ENCODE measurements at regions of chr12 and their contacts with region 1.

Region 1: GRCh38 chr12:27123642-27124041 is 41.3 kb upstream of the C12orf71 start:
- DNase-seq: no peak
- ATAC-seq: no peak
- H3K4me3 ChIP-seq: no peak overlapping the region
- H3K27ac ChIP-seq: no peak overlapping the region
- H3K4me1 ChIP-seq: no peaks in the 10 kb centered on the region
- H3K27me3 ChIP-seq: no peaks in the 10 kb centered on the region
- CTCF ChIP-seq: peak in 2 of 3 experiments; percentile 28 to 37; a peak in 3 of 6 replicates
- POLR2A ChIP-seq: no peak
- RAD21 ChIP-seq: peak; percentile 47

Region 2: DNA sequence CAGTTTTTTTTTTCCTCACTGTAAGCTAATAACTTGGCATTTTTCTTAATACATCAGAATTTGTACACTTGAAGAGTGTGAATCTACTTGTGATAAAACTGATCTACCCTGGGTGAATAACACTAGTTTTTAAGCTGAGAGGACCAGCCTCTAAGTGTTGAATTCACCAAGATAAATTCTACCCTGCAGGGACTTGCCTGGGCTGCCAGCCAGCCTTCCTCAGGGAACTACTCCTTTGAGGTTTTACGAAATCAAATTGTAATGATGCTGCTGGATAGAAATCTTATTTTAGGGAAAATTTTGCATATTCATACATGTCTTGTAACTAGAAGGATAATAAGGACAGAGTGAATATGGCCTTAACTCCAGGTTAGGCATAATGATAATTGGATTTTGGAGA is 99.4 kb before region 1 on chr12:
- CTCF ChIA-PET with region 1: no interaction called
- POLR2A ChIA-PET with region 1: no interaction called
- RAD21 ChIA-PET with region 1: no interaction called
- intact Hi-C with region 1: loop called (anchors 5 kb)
- DNase-seq: no peak
- ATAC-seq: no peak
- H3K4me3 ChIP-seq: no peak overlapping the region
- H3K27ac ChIP-seq: no peak overlapping the region
- H3K4me1 ChIP-seq: peaks cover 6 to 16% of the 10 kb centered on the region in 2 experiments; a peak in 3 of 4 replicates
- H3K27me3 ChIP-seq: no peaks in the 10 kb centered on the region
- CTCF ChIP-seq: no peak
- POLR2A ChIP-seq: no peak
- RAD21 ChIP-seq: no peak

Region 3: DNA sequence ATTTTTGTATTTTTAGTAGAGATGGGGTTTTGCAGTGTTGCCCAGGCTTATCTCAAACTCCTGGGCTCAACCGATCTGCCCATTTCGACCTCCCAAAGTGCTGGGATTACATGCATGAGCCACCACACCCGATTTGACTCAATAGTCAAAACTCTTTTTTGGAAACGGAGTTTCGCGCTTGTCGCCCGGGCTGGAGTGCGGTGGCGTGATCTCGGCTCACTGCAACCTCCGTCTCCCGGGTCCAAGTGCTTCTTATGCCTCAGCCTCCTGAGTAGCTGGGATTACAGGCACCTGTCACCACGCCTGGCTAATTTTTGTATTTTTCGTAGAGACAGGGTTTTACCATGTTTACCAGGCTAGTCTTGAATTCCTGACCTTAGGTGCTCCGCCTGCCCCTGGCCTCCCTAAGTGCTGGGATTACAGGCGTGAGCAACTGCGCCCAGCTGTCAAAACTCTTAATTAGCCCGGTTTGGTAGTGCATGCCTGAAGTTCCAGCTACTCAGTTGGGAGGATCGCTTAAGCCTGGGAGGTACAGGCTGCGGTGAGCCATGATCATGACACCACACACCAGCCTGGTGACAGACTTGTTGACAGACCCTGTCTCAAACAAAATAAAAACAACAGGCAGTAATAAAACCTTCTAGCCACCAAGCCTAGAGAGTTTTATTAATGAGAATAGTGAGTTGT is 88.9 kb before region 1 on chr12:
- CTCF ChIA-PET with region 1: no interaction called
- POLR2A ChIA-PET with region 1: no interaction called
- RAD21 ChIA-PET with region 1: no interaction called
- intact Hi-C with region 1: loop called (anchors 5 kb)
- DNase-seq: no peak
- ATAC-seq: no peak
- H3K4me3 ChIP-seq: no peak overlapping the region
- H3K27ac ChIP-seq: no peak overlapping the region
- H3K4me1 ChIP-seq: no peaks in the 10 kb centered on the region
- H3K27me3 ChIP-seq: no peaks in the 10 kb centered on the region
- CTCF ChIP-seq: no peak
- POLR2A ChIP-seq: no peak
- RAD21 ChIP-seq: no peak